Mammary epithelial cell (primary cell): ENCODE measurements at regions of chr4 and their contacts with region 1.

Region 1: DNA sequence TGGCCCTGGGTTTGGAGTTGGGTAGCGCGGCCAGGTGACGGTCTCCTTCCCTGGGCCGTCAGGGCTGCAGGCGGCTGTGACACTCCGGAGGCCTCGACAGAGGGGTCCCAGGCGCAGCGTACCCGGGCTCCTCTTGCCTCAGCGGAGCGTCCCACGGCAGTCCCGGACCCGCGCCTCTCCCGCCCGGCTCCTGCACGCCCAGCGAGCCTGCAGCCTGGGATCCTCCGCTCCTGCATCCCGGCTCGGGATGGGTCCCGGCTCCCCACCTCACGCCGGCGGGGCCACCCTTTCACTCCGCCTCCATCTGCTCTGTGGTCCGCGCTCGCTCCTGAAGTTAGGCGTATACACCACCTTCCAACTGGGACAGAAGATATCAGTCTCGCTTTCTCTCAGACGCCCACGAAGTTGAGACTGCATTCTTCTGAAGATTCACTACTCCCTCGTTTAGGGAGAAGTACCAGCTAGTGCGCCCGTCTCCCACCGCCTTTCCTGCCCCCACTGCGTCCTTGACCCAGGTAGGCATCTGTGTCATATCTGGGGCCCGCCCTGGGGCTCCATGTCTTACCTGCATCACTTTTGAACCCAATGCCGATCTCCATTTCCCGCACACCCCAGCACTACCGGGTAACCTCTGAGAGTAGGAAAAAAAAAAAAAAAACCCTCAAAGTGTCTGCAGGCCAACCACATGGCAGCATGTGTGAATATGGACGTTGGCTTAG is 32.3 kb upstream of the KDR start:
- DNase-seq: no peak
- H3K4me3 ChIP-seq: peak overlapping the region in 1 of 3 experiments; percentile 24
- H3K27ac ChIP-seq: no peak overlapping the region
- H3K4me1 ChIP-seq: peaks cover 2% of the 10 kb centered on the region
- H3K27me3 ChIP-seq: no peaks in the 10 kb centered on the region
- CTCF ChIP-seq: no peak

Region 2: DNA sequence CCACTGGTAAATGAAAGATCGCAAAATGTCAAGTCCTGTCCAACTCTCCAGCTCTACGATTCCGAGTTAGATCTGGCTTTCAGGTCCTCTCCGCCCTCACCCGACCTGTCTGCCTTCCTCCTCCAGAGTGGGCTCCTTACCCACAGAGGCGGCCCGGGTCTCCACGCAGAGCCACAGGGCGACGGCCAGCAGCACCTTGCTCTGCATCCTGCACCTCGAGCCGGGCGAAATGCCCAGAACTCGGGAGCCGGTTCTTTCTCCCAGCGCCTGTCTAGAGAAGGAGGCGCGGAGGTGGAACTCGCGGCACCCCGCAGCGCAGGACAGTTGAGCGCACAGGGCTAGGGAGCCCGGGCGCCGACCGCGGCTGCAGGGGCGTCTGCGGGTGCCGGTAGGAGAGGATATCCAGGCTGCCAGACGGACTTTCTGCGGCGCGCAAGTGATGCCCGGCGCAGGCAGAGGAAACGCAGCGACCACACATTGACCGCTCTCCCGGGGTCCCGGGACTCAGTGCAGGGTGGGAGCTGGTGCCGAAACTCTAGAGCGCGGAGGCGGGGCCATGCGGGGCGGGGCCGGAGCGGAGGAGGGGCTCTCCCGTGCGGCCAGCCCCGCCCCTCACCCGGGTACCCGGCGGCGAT is 32.5 kb before region 1 on chr4 and contains the start of gene KDR:
- CTCF ChIA-PET with region 1: no interaction called
- dilution Hi-C with region 1: no loop called
- in situ Hi-C with region 1: no loop called
- intact Hi-C with region 1: no loop called
- DNase-seq: peak; percentile 12
- H3K4me3 ChIP-seq: peak within 1 kb of the TSS; percentile 31 to 49 (median 45)
- H3K27ac ChIP-seq: no peak within 1 kb of the TSS
- H3K4me1 ChIP-seq: peaks cover 9% of the 10 kb centered on the region
- H3K27me3 ChIP-seq: peaks cover 22% of the 10 kb centered on the region
- CTCF ChIP-seq: no peak
- total RNA-seq, gene KDR: 0.49 to 1.2 TPM

Region 3: DNA sequence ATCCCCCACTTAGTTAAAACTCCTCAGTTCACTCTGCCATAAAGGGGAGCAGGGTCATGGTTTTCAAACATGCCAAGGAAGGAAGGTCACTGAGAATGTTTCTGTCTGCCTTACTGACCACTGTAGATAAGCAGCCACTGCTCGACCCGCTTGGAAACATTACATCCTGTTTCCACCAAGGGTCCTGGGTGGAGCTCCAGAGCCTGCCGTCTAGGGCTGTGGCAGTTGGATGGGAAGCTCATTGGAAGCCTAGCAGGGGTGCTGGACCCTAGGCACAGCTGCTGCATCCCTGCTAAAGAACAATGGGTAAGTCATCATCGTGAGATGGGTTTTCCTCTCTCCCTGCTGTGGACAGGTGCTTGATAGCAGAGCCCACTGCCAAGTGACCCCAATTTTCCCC is 112.3 kb after region 1 on chr4:
- CTCF ChIA-PET with region 1: no interaction called
- dilution Hi-C with region 1: no loop called
- in situ Hi-C with region 1: no loop called
- intact Hi-C with region 1: loop called (anchors 10 kb)
- DNase-seq: no peak
- H3K4me3 ChIP-seq: no peak overlapping the region
- H3K27ac ChIP-seq: no peak overlapping the region
- H3K4me1 ChIP-seq: no peaks in the 10 kb centered on the region
- H3K27me3 ChIP-seq: peaks cover 5% of the 10 kb centered on the region
- CTCF ChIP-seq: no peak